Activated T-helper 1 cell treated with anti-CD3 and anti-CD28 coated beads, Interleukin-12 subunit alpha, Interleukin-12 subunit beta, Interleukin-2, Interleukin-4 antibody, amounts not matched to agents 30 ng/mL and 10 ng/mL and 1 ng/mL, durations not matched to agents 14 hours and 24 hours and 36 hours (primary cell): ENCODE measurements at regions of chr16 and their contacts with region 1.

Region 1: DNA sequence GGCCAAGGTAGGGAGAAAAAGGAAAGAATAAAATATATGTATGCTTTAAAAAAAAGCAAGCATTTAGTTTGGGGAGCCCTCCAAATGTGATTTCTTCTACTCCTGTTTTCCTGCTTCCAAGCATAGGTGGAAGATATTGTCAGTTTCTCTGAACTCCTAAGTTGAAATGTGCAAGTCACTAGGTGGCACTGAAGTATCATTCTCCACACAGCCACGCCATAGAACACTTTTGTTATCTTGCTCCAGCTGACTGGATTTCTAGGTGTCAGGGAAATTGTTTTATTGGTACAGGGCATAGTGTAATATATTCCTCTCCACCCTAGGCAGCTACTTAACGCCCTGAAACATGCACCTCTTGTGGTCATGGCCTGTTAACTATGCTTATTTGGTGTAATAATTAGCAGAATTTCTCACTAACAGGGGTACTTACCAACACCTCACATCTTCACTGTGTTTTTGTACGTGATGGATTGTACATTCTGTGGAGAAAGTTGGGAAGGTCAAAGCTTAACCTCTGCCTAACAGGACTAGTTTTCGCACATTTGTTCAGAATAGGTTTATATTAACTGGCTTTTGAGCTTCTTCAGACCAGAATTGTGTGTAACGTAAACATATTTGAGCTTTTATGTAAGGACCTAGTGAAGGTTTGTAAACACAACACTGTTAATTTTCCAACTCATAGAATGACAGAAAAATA is 69.3 kb downstream of the FTO start:
- DNase-seq: no peak
- H3K4me3 Mint-ChIP-seq: no peak overlapping the region
- H3K27ac Mint-ChIP-seq: no peak overlapping the region
- H3K4me1 Mint-ChIP-seq: peaks cover 27% of the 10 kb centered on the region
- H3K27me3 Mint-ChIP-seq: no peaks in the 10 kb centered on the region

Region 2: GRCh38 chr16:53482123-53482522 is 291.2 kb before region 1 on chr16:
- intact Hi-C with region 1: no loop called
- DNase-seq: no peak
- H3K4me3 Mint-ChIP-seq: no peak overlapping the region
- H3K27ac Mint-ChIP-seq: no peak overlapping the region
- H3K4me1 Mint-ChIP-seq: peaks cover 20% of the 10 kb centered on the region
- H3K27me3 Mint-ChIP-seq: no peaks in the 10 kb centered on the region

Region 3: GRCh38 chr16:53743149-53743566 is 30.1 kb before region 1 on chr16:
- intact Hi-C with region 1: loop called (anchors 2 kb)
- DNase-seq: no peak
- H3K4me3 Mint-ChIP-seq: no peak overlapping the region
- H3K27ac Mint-ChIP-seq: no peak overlapping the region
- H3K4me1 Mint-ChIP-seq: peaks cover 31% of the 10 kb centered on the region
- H3K27me3 Mint-ChIP-seq: no peaks in the 10 kb centered on the region

Region 4: GRCh38 chr16:53817117-53817755 is 43.9 kb after region 1 on chr16:
- intact Hi-C with region 1: no loop called
- DNase-seq: no peak
- H3K4me3 Mint-ChIP-seq: no peak overlapping the region
- H3K27ac Mint-ChIP-seq: no peak overlapping the region
- H3K4me1 Mint-ChIP-seq: peaks cover 13% of the 10 kb centered on the region
- H3K27me3 Mint-ChIP-seq: no peaks in the 10 kb centered on the region

Region 5: GRCh38 chr16:54633943-54634362 is 860.7 kb after region 1 on chr16:
- intact Hi-C with region 1: no loop called
- DNase-seq: no peak
- H3K4me3 Mint-ChIP-seq: no peak overlapping the region
- H3K27ac Mint-ChIP-seq: no peak overlapping the region
- H3K4me1 Mint-ChIP-seq: no peaks in the 10 kb centered on the region
- H3K27me3 Mint-ChIP-seq: no peaks in the 10 kb centered on the region

Region 6: DNA sequence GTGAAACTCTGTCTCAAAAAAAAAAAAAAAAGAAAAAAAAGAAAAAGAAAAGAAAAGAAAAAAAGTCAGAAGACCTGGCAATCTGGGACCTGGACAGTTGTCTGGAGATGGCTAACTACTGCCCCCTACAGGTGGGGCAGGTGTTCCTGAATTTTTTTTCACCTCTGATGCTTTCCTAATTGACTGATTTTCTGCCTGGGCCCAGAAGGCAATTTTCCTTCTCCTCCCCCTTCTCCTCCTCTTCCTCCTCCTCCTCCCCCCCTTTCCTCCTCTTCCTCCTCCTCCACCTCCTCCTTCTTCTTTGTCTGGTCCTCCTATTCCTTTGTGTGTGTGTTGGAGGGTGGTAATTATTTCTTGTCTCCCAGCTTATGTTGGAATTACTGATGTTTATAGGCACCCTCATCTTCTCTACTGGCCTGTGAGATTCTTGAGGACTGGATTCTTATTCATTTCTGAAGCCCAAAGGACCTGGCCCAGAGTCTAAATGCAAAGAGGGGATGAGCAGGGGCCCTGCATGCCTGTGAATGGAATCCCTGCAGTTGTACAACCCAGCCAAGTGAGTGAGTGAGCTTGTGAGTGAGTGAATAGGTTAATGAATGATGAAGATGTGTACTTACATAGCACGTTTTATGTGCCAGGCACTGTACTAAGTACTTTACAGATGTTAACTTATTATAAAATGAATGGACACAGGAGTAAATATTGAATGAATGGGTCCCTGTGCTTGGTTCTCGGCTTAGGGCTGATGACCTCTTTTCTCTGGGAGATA is 1184.3 kb after region 1 on chr16:
- intact Hi-C with region 1: loop called (anchors 5 kb)
- DNase-seq: no peak
- H3K4me3 Mint-ChIP-seq: no peak overlapping the region
- H3K27ac Mint-ChIP-seq: no peak overlapping the region
- H3K4me1 Mint-ChIP-seq: no peaks in the 10 kb centered on the region
- H3K27me3 Mint-ChIP-seq: peaks cover 3% of the 10 kb centered on the region